Ovary (tissue), 10 donors: ENCODE measurements at regions of chr4 and their contacts with region 1.

Region 1: DNA sequence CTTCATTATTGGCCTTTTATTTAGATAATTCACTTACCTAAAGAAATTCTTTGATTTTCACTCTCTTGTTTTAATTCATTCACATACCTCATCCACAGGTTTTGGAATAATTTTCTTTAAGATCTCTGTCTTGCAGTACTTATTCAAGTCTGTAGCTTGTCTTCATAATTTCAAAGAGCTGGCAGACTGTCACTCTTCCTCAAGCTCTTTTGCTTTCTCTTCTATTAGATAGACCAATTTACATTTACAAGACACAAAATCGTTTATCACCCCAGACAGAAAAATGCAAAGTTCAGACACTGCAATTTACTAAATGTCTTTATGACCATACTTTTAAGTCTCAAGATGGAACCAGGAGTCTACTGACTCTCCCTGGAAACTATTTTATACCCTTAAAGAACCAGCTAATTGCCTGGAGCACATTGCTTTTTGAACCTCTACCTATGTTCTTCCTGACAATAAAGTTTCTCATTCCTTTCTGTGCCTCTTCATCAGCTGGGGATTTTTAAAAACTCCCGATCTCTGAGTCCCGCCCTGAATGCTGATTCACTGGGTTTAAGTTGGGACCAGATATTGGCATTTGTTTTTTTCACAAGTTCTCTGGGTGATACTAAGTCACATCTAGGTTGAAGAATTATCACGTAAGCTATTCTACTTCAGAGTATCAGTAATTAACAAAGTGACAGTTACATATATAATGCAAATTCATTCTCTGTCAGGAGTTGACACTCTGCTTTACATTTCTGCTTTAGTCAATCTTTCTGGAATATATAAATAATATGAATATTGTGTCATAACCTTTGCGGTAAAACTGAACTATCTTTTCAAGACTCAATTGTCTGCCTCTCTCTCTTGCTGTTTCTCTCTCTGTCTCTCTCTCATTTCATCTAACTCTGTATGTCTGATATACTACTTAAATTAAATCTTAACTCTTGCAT is 196.4 kb downstream of the PCDH7 start:
- DNase-seq: no peak
- H3K4me3 ChIP-seq: no peak overlapping the region
- H3K27ac ChIP-seq: no peak overlapping the region
- H3K4me1 ChIP-seq: no peaks in the 10 kb centered on the region
- H3K27me3 ChIP-seq: no peaks in the 10 kb centered on the region
- CTCF ChIP-seq: no peak
- EP300 ChIP-seq: no peak
- POLR2A ChIP-seq: no peak

Region 2: GRCh38 chr4:31134720-31135119 is 218.1 kb after region 1 on chr4:
- intact Hi-C with region 1: no loop called
- DNase-seq: no peak
- H3K4me3 ChIP-seq: no peak overlapping the region
- H3K27ac ChIP-seq: no peak overlapping the region
- H3K4me1 ChIP-seq: no peaks in the 10 kb centered on the region
- H3K27me3 ChIP-seq: no peaks in the 10 kb centered on the region
- CTCF ChIP-seq: no peak
- EP300 ChIP-seq: no peak
- POLR2A ChIP-seq: no peak

Region 3: GRCh38 chr4:32189130-32189529 is 1272.5 kb after region 1 on chr4:
- intact Hi-C with region 1: loop called in 1 of 4 experiments (anchors 5 kb)
- DNase-seq: no peak
- H3K4me3 ChIP-seq: no peak overlapping the region
- H3K27ac ChIP-seq: no peak overlapping the region
- H3K4me1 ChIP-seq: no peaks in the 10 kb centered on the region
- H3K27me3 ChIP-seq: no peaks in the 10 kb centered on the region
- CTCF ChIP-seq: no peak
- EP300 ChIP-seq: no peak
- POLR2A ChIP-seq: no peak